ENCODE measurements at regions of chr16 and their contacts with region 1.

Region 1: DNA sequence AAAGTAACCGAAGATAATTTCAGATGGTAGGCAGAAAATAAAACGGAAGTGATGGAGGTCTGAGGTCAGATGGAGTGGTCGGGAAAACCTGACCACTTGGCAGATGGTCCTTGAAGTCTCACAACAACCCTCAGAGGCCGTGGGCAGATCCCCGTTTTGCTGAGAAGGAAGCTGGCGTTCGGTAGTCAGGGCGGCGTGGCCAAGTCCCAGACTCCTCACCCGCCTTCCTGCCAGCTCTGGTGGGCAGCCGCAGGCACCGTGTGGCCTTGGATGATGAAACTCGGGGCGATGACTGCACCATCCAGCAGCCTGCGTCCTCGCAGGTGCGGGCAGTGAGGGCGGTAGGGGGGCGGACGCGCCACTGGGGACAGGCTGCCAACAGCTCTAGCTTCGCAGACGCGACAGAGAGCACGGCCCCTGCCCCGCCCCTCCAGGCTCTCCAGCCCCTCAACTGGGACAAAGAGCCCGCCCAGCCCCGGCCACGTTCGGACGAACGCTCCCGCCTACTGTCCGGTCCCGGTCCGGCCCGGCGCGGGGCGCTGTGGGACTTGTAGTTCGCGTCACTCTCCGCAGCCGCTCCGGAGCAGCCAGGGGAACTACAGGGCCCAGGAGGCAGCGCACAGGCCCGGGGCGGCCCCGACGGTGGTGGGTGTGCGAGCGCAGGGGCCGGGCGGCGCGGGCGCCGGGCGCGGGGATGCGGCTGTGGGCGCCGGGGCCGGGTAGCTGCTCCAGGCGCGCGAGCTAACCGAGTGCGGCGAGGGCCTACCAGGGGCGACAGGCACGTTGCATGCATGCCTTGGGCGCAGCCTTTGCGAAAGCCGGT is at the start of gene GPT2:
- DNase-seq: peak; percentile 91
- ATAC-seq: peak; percentile 96
- H3K4me3 Mint-ChIP-seq: peak within 1 kb of the TSS; percentile 80
- H3K27ac Mint-ChIP-seq: peak within 1 kb of the TSS; percentile 94
- H3K4me1 Mint-ChIP-seq: peaks cover 10% of the 10 kb centered on the region
- H3K27me3 Mint-ChIP-seq: peaks cover 24% of the 10 kb centered on the region
- total RNA-seq, gene GPT2: 25.6 to 34.9 TPM

Region 2: GRCh38 chr16:46621006-46621933 is 262.6 kb before region 1 on chr16 and contains the start of gene SHCBP1:
- CTCF ChIA-PET with region 1: no interaction called
- POLR2A ChIA-PET with region 1: no interaction called
- intact Hi-C with region 1: loop called in 1 of 2 experiments (anchors 1 kb)
- DNase-seq: peak; percentile 92
- ATAC-seq: peak; percentile 96
- H3K4me3 Mint-ChIP-seq: peak within 1 kb of the TSS; percentile 96
- H3K27ac Mint-ChIP-seq: peak within 1 kb of the TSS; percentile 86
- H3K4me1 Mint-ChIP-seq: peaks cover 16% of the 10 kb centered on the region
- H3K27me3 Mint-ChIP-seq: peaks cover 2% of the 10 kb centered on the region
- total RNA-seq, gene SHCBP1: 29.1 to 47.4 TPM

Region 3: GRCh38 chr16:46859719-46860152 is 24.2 kb before region 1 on chr16:
- CTCF ChIA-PET with region 1: interaction called, 7 read pairs
- POLR2A ChIA-PET with region 1: no interaction called
- intact Hi-C with region 1: loop called in 1 of 2 experiments (anchors 2 kb)
- DNase-seq: peak; percentile 74
- ATAC-seq: peak; percentile 83
- H3K4me3 Mint-ChIP-seq: no peak overlapping the region
- H3K27ac Mint-ChIP-seq: no peak overlapping the region
- H3K4me1 Mint-ChIP-seq: peaks cover 27% of the 10 kb centered on the region
- H3K27me3 Mint-ChIP-seq: no peaks in the 10 kb centered on the region

Region 4: GRCh38 chr16:46908540-46909372 is 24.9 kb after region 1 on chr16:
- CTCF ChIA-PET with region 1: interaction called, 5 read pairs
- POLR2A ChIA-PET with region 1: no interaction called
- intact Hi-C with region 1: loop called in 1 of 2 experiments (anchors 2 kb)
- DNase-seq: peak; percentile 77
- ATAC-seq: peak; percentile 36
- H3K4me3 Mint-ChIP-seq: no peak overlapping the region
- H3K27ac Mint-ChIP-seq: no peak overlapping the region
- H3K4me1 Mint-ChIP-seq: peaks cover 5% of the 10 kb centered on the region
- H3K27me3 Mint-ChIP-seq: no peaks in the 10 kb centered on the region

Region 5: DNA sequence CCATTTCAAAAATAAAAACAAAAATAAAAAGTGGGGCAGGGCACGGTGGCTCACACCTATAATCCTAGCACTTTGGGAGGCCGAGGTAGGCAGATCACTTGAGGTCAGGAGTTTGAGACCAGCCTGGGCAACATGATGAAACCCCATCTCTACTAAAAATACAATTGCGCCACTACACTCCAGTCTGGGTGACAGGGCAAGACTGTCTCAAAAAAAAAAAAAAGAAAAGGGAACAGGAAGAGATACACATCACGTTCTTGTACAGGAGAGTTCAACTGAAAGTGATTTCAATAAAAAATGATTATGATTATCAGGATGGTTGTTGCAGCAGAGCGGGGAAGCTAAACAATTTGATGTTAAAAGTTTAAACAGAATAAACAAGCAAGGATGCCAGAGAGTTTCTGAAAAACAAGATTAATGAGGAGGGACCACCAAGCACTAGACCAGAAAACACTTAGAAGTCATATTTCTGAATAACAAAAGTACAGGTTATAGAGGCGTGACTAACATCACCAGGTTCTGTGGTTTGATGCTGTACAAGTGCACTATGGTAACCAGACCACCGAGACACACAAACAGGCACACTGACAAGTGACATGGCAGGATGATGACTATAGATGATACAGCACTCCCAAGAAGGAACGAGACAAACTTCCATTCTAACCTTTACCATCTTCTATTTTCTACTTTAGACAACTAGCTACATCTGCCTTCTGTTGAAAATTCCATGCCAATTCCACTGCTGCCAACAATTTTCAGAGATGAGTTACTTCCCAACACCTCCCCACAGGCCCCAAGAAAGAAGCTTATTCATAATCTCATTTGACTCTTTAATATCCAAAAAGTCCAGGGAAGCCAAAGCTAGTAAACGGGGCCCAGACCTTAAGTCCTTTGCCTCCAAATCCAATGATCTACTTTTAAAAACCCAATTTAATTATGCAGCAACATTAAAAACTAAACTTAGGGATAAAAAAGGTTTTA is 77.8 kb after region 1 on chr16:
- CTCF ChIA-PET with region 1: no interaction called
- POLR2A ChIA-PET with region 1: no interaction called
- intact Hi-C with region 1: no loop called
- DNase-seq: peak; percentile 66
- ATAC-seq: peak; percentile 97
- H3K4me3 Mint-ChIP-seq: peak overlapping the region; percentile 11
- H3K27ac Mint-ChIP-seq: peak overlapping the region; percentile 88
- H3K4me1 Mint-ChIP-seq: peaks cover 40% of the 10 kb centered on the region
- H3K27me3 Mint-ChIP-seq: no peaks in the 10 kb centered on the region

Measured in activated CD4-positive, alpha-beta T cell treated with anti-CD3 and anti-CD28 coated beads for 36 hours (primary cell).